H1 (cell line): ENCODE measurements at regions of chr6 and their contacts with region 1.

Region 1: GRCh38 chr6:34126419-34126818 is 19.5 kb downstream of the GRM4 start:
- DNase-seq: no peak
- H3K4me3 ChIP-seq: no peak overlapping the region
- H3K27ac ChIP-seq: no peak overlapping the region
- H3K4me1 ChIP-seq: peaks cover 18 to 22% (median 21%) of the 10 kb centered on the region in 4 experiments
- H3K27me3 ChIP-seq: no peaks in the 10 kb centered on the region
- CTCF ChIP-seq: peak in 2 of 3 experiments; percentile 14 to 42; a peak in 2 of 4 replicates
- EP300 ChIP-seq: no peak
- POLR2A ChIP-seq: no peak
- RAD21 ChIP-seq: peak in 1 of 2 experiments; percentile 3; a peak in 1 of 4 replicates

Region 2: GRCh38 chr6:34115403-34115795 is 11.0 kb before region 1 on chr6:
- CTCF ChIA-PET with region 1: interaction called, 25 read pairs
- POLR2A ChIA-PET with region 1: interaction called, 9 read pairs
- DNase-seq: peak in 1 of 2 experiments; percentile 85
- H3K4me3 ChIP-seq: no peak overlapping the region
- H3K27ac ChIP-seq: no peak overlapping the region
- H3K4me1 ChIP-seq: peaks cover 0 to 1% (median 0%) of the 10 kb centered on the region in 4 experiments; a peak in 1 of 7 replicates
- H3K27me3 ChIP-seq: no peaks in the 10 kb centered on the region
- CTCF ChIP-seq: no peak
- EP300 ChIP-seq: no peak
- POLR2A ChIP-seq: no peak
- RAD21 ChIP-seq: peak in 1 of 2 experiments; percentile 14; a peak in 1 of 4 replicates

Region 3: GRCh38 chr6:34138914-34139510 is 12.6 kb after region 1 on chr6:
- CTCF ChIA-PET with region 1: interaction called, 128 read pairs
- POLR2A ChIA-PET with region 1: interaction called, 27 read pairs
- DNase-seq: no peak
- H3K4me3 ChIP-seq: no peak overlapping the region; a peak in 1 of 8 replicates
- H3K27ac ChIP-seq: no peak overlapping the region
- H3K4me1 ChIP-seq: peaks cover 9 to 61% (median 45%) of the 10 kb centered on the region in 4 experiments
- H3K27me3 ChIP-seq: peaks cover 0 to 14% (median 8%) of the 10 kb centered on the region in 4 experiments; a peak in 5 of 7 replicates
- CTCF ChIP-seq: no peak
- EP300 ChIP-seq: no peak
- POLR2A ChIP-seq: no peak
- RAD21 ChIP-seq: no peak

Region 4: GRCh38 chr6:34145161-34146020 is 19.0 kb after region 1 on chr6:
- CTCF ChIA-PET with region 1: interaction called, 128 read pairs
- POLR2A ChIA-PET with region 1: interaction called, 27 read pairs
- DNase-seq: peak in 1 of 2 experiments; percentile 80
- H3K4me3 ChIP-seq: peak overlapping the region; percentile 51 to 77 (median 64)
- H3K27ac ChIP-seq: no peak overlapping the region
- H3K4me1 ChIP-seq: peaks cover 12 to 57% (median 47%) of the 10 kb centered on the region in 4 experiments
- H3K27me3 ChIP-seq: peaks cover 0 to 46% (median 31%) of the 10 kb centered on the region in 4 experiments; a peak in 6 of 7 replicates
- CTCF ChIP-seq: no peak
- EP300 ChIP-seq: no peak
- POLR2A ChIP-seq: no peak
- RAD21 ChIP-seq: no peak; a peak in 1 of 4 replicates

Region 5: GRCh38 chr6:34447910-34448309 is 321.5 kb after region 1 on chr6:
- CTCF ChIA-PET with region 1: no interaction called
- POLR2A ChIA-PET with region 1: no interaction called
- DNase-seq: peak in 1 of 2 experiments; percentile 75
- H3K4me3 ChIP-seq: no peak overlapping the region
- H3K27ac ChIP-seq: no peak overlapping the region
- H3K4me1 ChIP-seq: peaks cover 0 to 5% (median 0%) of the 10 kb centered on the region in 4 experiments; a peak in 2 of 7 replicates
- H3K27me3 ChIP-seq: no peaks in the 10 kb centered on the region
- CTCF ChIP-seq: no peak
- EP300 ChIP-seq: no peak
- POLR2A ChIP-seq: no peak
- RAD21 ChIP-seq: no peak